CD8-positive, alpha-beta T cell (primary cell): ENCODE measurements at regions of chr3 and their contacts with region 1.

Region 1: DNA sequence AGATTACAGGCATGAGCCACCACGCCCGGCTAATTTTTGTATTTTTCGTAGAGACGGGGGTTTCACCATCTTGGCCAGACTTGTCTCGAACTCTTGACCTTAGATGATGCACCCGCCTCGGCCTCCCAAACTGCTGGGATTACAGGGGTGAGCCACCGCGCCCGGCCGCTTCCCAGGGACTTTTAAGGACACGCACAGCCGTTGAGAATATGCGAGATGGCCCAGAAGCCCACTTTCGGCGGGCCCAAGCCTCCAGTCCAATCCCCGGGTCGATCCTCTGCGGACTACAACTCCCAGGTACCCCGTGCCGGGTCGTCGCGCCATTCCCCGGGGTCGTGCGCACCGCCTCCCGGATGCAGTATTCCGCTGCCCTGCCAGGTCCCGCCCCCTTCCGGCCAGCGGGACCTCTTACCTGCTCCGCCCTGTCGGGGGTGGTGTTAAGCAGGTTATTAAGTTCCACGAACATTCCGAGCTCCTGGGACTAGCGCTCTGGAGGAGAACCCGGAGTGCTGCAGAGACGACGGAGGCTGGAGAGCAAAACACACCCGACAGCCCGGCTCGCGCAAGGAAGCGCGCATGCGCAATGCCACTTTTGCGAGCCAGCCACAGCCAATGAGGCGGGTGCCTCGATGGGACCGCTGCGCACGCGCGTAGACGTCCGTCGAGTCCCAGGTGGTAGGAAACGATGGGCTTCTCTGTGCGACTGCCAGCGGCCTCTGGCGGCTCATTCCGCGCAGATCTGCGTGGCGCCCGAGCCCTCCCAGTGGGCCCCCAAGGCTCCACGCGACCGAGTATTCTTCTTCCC is at the start of gene ELP6:
- DNase-seq: peak; percentile 92 to 99 (median 96)
- ATAC-seq: peak; percentile 91
- H3K4me3 ChIP-seq: peak within 1 kb of the TSS; percentile 85 to 99
- H3K4me3 Mint-ChIP-seq: peak within 1 kb of the TSS; percentile 98
- H3K27ac ChIP-seq: peak within 1 kb of the TSS; percentile 88 to 95
- H3K27ac Mint-ChIP-seq: peak within 1 kb of the TSS; percentile 97
- H3K4me1 ChIP-seq: peaks cover 11% of the 10 kb centered on the region
- H3K4me1 Mint-ChIP-seq: peaks cover 22% of the 10 kb centered on the region
- H3K27me3 ChIP-seq: no peaks in the 10 kb centered on the region
- H3K27me3 Mint-ChIP-seq: no peaks in the 10 kb centered on the region
- CTCF ChIP-seq: peak; percentile 66
- total RNA-seq, gene ELP6: 13.0 to 13.7 TPM

Region 2: DNA sequence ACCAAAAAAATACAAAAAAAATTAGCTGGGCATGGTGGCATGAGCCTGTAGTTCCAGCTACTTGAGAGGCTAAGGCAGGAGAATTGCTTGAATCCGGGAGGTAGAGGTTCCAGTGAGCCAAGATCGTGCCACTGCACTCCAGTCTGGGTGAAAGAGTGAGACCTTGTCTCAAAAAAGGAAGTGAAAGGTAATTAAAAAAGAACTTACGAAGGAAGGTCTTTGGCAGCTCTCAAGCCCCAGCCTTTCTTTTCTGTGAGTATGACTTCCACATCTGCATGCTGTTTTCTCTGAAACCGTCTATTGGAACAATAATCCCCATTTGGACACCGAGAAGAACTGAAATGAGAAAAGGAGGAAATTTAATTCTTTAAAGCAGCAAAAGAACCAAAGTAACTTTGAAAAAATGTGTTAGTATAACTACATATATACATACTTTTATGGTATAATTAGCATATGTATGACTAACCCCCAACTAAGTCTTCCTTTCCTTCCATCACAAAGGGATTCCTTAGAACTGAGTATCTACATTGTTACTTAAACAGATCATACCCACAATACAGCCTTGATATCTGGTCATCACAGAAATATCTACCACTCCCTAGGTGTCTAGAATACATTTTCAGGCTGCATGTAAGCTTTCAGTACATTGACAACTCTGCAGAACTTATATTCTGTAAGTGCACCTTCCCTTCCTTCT is 399.5 kb before region 1 on chr3:
- CTCF ChIA-PET with region 1: no interaction called
- POLR2A ChIA-PET with region 1: no interaction called
- intact Hi-C with region 1: no loop called
- DNase-seq: no peak
- ATAC-seq: no peak
- H3K4me3 ChIP-seq: no peak overlapping the region
- H3K4me3 Mint-ChIP-seq: no peak overlapping the region
- H3K27ac ChIP-seq: no peak overlapping the region
- H3K27ac Mint-ChIP-seq: no peak overlapping the region
- H3K4me1 ChIP-seq: peaks cover 5% of the 10 kb centered on the region
- H3K4me1 Mint-ChIP-seq: peaks cover 16% of the 10 kb centered on the region
- H3K27me3 ChIP-seq: no peaks in the 10 kb centered on the region
- H3K27me3 Mint-ChIP-seq: no peaks in the 10 kb centered on the region
- CTCF ChIP-seq: no peak

Region 3: GRCh38 chr3:47282424-47283192 is 230.7 kb before region 1 on chr3 and contains the starts of genes KIF9 and KLHL18:
- CTCF ChIA-PET with region 1: no interaction called
- POLR2A ChIA-PET with region 1: no interaction called
- intact Hi-C with region 1: loop called in 1 of 2 experiments (anchors 2 kb)
- DNase-seq: peak; percentile 92 to 99 (median 96)
- ATAC-seq: peak; percentile 86
- H3K4me3 ChIP-seq: peak within 1 kb of the TSS; percentile 75 to 79
- H3K4me3 Mint-ChIP-seq: peak within 1 kb of the TSS; percentile 97
- H3K27ac ChIP-seq: peak within 1 kb of the TSS; percentile 98 to 99
- H3K27ac Mint-ChIP-seq: peak within 1 kb of the TSS; percentile 99
- H3K4me1 ChIP-seq: peaks cover 32% of the 10 kb centered on the region
- H3K4me1 Mint-ChIP-seq: peaks cover 40% of the 10 kb centered on the region
- H3K27me3 ChIP-seq: no peaks in the 10 kb centered on the region
- H3K27me3 Mint-ChIP-seq: no peaks in the 10 kb centered on the region
- CTCF ChIP-seq: no peak
- total RNA-seq, gene KIF9: 11.7 to 12.2 TPM
- total RNA-seq, gene KLHL18: 61.6 to 62.8 TPM

Region 4: DNA sequence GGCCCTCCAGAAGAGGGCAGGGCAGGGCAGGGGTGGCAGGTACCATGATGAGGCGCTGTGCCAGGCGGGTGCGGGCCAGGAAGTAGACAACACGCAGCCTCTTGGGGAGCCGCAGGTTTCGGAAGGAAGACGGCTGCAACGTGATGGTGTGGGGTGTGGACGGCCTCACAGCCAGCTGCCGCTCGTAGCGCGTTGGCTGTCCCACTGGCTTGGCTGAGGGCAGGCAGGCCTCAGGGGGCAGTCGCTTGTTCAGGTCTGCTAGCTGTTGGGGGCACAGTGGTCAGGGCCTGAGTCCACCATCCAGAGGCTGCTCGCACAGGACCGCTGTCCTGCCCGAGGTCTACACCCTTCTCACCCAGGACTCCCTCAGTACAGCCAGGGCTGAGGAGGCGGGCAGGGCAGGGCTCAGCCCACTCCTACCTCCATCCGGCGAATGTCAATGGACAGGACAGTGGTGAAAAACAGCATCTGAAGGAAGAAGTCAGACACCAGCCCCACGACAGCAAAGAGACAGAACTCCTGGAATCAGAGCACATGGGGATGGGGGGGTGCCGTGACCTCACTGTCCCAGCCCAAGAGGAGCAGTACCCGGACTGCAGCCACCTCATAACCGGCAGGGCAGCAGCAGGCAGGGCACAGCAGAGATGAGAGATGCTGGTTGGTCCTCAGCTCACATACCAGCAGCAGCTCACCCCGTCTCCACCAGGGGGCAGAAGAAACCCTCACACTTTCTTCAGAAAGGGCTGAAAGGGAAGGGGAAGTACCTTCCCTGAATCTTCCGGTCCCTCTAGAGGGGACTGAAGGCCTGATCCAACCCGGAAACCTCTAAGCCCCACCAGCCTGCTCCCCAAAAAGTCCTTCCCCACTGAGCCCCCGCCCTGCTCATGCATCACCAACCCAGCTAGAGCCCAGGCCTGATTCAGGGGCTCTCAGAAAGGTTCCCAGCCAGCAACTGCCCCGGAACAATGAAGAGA is 92.5 kb before region 1 on chr3:
- CTCF ChIA-PET with region 1: interaction called, 8 read pairs
- POLR2A ChIA-PET with region 1: no interaction called
- intact Hi-C with region 1: loop called (anchors 1 kb)
- DNase-seq: peak; percentile 79 to 93 (median 89)
- ATAC-seq: peak; percentile 99
- H3K4me3 ChIP-seq: peak overlapping the region in 1 of 2 experiments; percentile 32
- H3K4me3 Mint-ChIP-seq: peak overlapping the region; percentile 70
- H3K27ac ChIP-seq: peak overlapping the region; percentile 53 to 90
- H3K27ac Mint-ChIP-seq: peak overlapping the region; percentile 99
- H3K4me1 ChIP-seq: peaks cover 14% of the 10 kb centered on the region
- H3K4me1 Mint-ChIP-seq: peaks cover 15% of the 10 kb centered on the region
- H3K27me3 ChIP-seq: no peaks in the 10 kb centered on the region
- H3K27me3 Mint-ChIP-seq: no peaks in the 10 kb centered on the region
- CTCF ChIP-seq: peak; percentile 91

Region 5: DNA sequence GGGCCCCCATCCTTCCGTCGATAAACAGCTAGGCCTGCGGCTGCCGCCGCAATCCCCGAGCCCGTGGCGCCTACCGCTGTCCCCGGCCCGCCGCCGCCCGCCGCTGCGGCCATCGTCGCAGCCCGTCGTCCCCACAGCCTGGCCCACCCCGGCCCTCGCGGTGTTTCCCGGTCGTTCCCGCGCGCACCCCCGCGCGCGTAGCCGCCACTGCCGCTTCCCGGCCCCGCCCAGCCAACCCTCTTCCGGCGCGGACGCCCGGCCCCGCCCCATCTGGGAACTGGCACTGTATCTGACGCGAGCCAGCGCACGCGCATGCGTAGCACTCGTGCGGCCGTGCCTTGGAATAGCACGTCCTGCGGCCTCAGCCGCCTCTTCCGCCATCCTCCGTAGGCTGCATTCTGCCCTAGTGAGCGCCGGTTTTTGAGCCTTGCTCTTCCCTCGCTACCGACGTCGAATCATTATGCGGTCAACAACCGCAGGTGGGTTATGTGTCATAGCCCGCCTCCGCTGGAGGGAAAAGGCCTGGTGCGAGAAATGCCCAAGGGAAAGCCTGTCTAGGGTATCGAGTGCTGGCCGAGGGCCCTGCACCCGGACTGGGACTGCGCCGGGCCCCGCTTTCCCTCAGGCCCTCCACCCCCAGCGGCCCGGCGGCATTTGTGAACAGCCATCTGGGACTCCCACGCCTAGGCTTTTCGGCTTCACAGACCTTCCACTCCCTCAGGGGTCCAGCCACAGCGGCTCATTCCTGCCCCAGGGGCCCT is 268.5 kb after region 1 on chr3 and contains the start of gene SMARCC1:
- CTCF ChIA-PET with region 1: no interaction called
- POLR2A ChIA-PET with region 1: no interaction called
- intact Hi-C with region 1: loop called (anchors 1 kb)
- DNase-seq: peak; percentile 91 to 99 (median 97)
- ATAC-seq: peak; percentile 87
- H3K4me3 ChIP-seq: peak within 1 kb of the TSS; percentile 54 to 91
- H3K4me3 Mint-ChIP-seq: peak within 1 kb of the TSS; percentile 89
- H3K27ac ChIP-seq: peak within 1 kb of the TSS; percentile 87 to 98
- H3K27ac Mint-ChIP-seq: peak within 1 kb of the TSS; percentile 97
- H3K4me1 ChIP-seq: peaks cover 23% of the 10 kb centered on the region
- H3K4me1 Mint-ChIP-seq: peaks cover 31% of the 10 kb centered on the region
- H3K27me3 ChIP-seq: no peaks in the 10 kb centered on the region
- H3K27me3 Mint-ChIP-seq: no peaks in the 10 kb centered on the region
- CTCF ChIP-seq: no peak
- total RNA-seq, gene SMARCC1: 65.4 to 68.2 TPM

Region 6: DNA sequence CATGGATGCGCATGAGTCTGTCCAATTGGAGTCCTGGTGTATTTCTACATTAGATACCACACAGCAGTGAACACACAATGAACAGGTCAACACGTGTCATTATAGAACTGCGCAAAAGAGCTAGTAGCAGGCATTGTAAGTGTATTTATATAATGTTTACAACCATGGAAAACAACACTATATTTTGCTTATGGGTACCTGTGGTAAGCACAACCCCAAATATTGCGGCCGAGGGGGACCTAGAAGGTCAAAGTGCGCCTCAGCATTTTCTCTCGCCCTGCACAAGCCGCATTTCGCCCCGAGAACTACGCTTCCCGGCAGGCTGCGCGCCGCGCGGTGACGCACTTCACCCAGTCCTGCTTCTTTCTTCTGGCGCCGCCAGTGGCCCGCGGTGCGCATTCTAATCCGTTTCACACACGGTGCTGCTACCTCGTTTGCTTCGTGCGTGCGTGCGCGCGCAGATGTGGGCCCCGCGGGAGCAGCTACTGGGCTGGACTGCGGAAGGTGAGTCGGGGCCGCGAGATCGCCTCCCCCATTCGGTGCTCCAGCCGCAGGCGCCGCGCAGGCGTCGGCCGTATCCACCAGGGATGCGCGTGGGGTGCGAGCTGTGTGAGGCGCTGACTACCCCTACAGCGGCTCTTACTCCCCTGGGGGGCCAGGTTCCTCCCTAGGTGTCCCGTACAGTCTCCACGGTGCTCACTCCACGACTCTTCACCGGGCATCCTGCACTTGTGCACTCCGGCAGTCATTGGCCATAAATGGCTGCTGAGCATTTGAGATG is 727.6 kb after region 1 on chr3 and contains the start of gene ZNF589:
- CTCF ChIA-PET with region 1: no interaction called
- POLR2A ChIA-PET with region 1: no interaction called
- intact Hi-C with region 1: loop called in 1 of 2 experiments (anchors 2 kb)
- DNase-seq: peak; percentile 91 to 97 (median 94)
- ATAC-seq: peak; percentile 97
- H3K4me3 ChIP-seq: peak within 1 kb of the TSS; percentile 66 to 90
- H3K4me3 Mint-ChIP-seq: peak within 1 kb of the TSS; percentile 92
- H3K27ac ChIP-seq: peak within 1 kb of the TSS; percentile 62 to 85
- H3K27ac Mint-ChIP-seq: peak within 1 kb of the TSS; percentile 93
- H3K4me1 ChIP-seq: peaks cover 23% of the 10 kb centered on the region
- H3K4me1 Mint-ChIP-seq: peaks cover 28% of the 10 kb centered on the region
- H3K27me3 ChIP-seq: no peaks in the 10 kb centered on the region
- H3K27me3 Mint-ChIP-seq: no peaks in the 10 kb centered on the region
- CTCF ChIP-seq: peak; percentile 31
- total RNA-seq, gene ZNF589: 18.9 to 20.9 TPM